Activated CD4-positive, alpha-beta memory T cell treated with anti-CD3 and anti-CD28 coated beads, Interleukin-2, amount 10 ng/mL, durations not matched to agents 7 days and 5 days (primary cell): ENCODE measurements at regions of chr6 and their contacts with region 1.

Region 1: GRCh38 chr6:135054569-135055498 is at the start of gene HBS1L:
- DNase-seq: peak; percentile 97
- H3K4me3 Mint-ChIP-seq: peak within 1 kb of the TSS; percentile 90
- H3K27ac Mint-ChIP-seq: peak within 1 kb of the TSS; percentile 94
- H3K4me1 Mint-ChIP-seq: peaks cover 40% of the 10 kb centered on the region
- H3K27me3 Mint-ChIP-seq: no peaks in the 10 kb centered on the region
- total RNA-seq, gene HBS1L: 90.3 to 91.6 TPM

Region 2: GRCh38 chr6:135044639-135045038 is 10.2 kb before region 1 on chr6:
- CTCF ChIA-PET with region 1: interaction called, 9 read pairs
- POLR2A ChIA-PET with region 1: interaction called, 19 read pairs
- DNase-seq: no peak
- H3K4me3 Mint-ChIP-seq: no peak overlapping the region
- H3K27ac Mint-ChIP-seq: no peak overlapping the region
- H3K4me1 Mint-ChIP-seq: peaks cover 52% of the 10 kb centered on the region
- H3K27me3 Mint-ChIP-seq: no peaks in the 10 kb centered on the region

Region 3: DNA sequence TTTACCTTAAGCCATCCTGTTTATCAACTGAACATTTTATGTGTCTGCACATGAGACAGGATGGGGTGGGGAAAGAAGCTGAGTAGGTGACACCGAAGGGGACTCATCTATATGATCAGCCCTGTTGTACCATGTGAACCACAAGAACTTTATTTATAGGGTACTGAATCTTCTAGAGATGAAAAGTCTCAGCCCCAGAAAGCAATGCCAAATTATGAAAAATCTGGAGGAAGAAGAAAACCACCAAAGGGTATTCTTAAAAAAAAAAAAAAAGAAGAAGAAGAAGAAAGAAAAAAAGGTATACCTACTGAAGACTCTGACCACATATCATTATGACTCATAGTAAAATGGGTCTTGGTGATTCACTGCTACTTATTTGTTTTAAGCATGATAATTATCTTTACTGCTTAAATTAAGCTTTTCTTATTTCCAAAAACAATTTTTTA is 39.6 kb after region 1 on chr6:
- CTCF ChIA-PET with region 1: interaction called, 9 read pairs
- POLR2A ChIA-PET with region 1: interaction called, 15 read pairs
- DNase-seq: peak; percentile 37
- H3K4me3 Mint-ChIP-seq: peak overlapping the region; percentile 38
- H3K27ac Mint-ChIP-seq: peak overlapping the region; percentile 92
- H3K4me1 Mint-ChIP-seq: peaks cover 47% of the 10 kb centered on the region
- H3K27me3 Mint-ChIP-seq: no peaks in the 10 kb centered on the region

Region 4: DNA sequence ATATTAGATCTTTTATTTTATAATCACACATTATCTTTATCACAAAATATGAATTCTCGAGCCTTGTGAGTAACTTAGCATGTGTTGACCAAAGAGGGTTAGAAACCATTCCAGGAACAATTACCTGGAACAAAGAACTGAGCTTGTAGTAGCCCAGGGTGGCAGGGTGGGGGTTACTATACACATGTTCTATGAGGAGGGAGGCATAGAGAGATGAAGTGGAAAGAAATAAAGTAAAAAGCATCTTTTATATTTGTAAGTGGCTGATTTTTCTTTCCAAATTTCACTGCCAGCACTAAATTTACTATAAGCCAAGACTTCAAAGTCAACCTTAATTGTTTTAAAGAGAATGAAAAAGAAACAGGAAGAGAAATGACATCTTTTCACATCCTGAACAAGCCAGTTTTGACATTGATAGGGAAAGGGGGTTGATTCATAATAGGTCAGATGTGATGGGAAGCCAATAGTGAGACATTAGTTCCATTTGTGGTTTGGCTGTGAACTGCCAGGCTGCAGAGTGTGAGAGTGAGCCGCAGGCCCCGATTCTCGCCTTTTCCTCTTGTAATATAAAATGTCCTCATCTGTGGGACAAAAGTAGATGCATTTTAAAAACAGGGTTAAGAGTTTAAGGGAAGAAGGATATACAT is 73.6 kb after region 1 on chr6:
- CTCF ChIA-PET with region 1: interaction called, 6 read pairs
- POLR2A ChIA-PET with region 1: interaction called, 19 read pairs
- DNase-seq: peak; percentile 74
- H3K4me3 Mint-ChIP-seq: peak overlapping the region; percentile 47
- H3K27ac Mint-ChIP-seq: peak overlapping the region; percentile 96
- H3K4me1 Mint-ChIP-seq: peaks cover 41% of the 10 kb centered on the region
- H3K27me3 Mint-ChIP-seq: no peaks in the 10 kb centered on the region

Region 5: DNA sequence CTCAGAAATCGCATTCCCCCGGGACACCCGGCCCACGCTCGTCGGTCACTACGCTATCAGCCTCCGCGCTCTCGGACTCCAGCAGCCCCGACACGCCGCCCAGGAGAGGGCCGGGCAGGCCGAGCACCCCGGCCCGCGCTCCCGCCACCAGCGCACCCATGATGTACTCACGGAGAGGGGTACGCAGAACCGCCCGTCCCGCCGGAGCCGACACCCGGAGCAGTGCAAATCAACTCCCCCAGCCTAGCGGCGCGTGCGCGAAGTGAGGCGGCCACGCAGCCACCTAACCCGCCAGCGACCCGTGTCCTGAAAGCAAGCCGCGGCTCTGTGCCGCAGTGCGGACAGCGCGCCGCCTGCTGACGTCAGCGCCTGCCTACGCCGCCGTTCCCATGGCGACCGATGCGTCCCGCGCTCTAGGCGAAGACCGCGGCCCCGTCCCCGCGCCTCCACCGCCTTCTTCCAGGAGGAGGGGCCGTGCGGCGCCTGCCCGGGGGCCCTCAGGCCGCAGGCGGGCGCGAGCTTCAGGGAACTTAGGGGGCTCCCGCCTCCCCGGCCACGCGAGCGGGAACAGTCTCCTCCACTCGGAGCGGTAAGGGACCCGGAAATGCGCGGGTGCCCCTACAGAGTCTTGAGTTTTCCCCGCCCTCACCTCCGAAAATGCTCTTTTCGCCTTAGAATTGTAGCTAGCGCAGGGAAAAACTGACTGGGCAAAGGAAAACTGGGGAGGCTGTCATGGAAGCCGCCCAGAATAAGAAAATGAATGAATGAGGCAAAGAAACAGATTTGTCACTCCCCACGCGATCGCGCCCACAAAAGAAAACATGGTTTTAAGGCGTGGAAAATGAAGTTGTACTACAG is 442.8 kb after region 1 on chr6 and contains the start of gene AHI1:
- CTCF ChIA-PET with region 1: no interaction called
- POLR2A ChIA-PET with region 1: interaction called, 11 read pairs
- DNase-seq: peak; percentile 88
- H3K4me3 Mint-ChIP-seq: no peak within 1 kb of the TSS
- H3K27ac Mint-ChIP-seq: no peak within 1 kb of the TSS
- H3K4me1 Mint-ChIP-seq: peaks cover 16% of the 10 kb centered on the region
- H3K27me3 Mint-ChIP-seq: peaks cover 3% of the 10 kb centered on the region
- total RNA-seq, gene AHI1: 18.5 to 21.5 TPM